CD8-positive, alpha-beta T cell (primary cell): ENCODE measurements at regions of chr6 and their contacts with region 1.

Region 1: DNA sequence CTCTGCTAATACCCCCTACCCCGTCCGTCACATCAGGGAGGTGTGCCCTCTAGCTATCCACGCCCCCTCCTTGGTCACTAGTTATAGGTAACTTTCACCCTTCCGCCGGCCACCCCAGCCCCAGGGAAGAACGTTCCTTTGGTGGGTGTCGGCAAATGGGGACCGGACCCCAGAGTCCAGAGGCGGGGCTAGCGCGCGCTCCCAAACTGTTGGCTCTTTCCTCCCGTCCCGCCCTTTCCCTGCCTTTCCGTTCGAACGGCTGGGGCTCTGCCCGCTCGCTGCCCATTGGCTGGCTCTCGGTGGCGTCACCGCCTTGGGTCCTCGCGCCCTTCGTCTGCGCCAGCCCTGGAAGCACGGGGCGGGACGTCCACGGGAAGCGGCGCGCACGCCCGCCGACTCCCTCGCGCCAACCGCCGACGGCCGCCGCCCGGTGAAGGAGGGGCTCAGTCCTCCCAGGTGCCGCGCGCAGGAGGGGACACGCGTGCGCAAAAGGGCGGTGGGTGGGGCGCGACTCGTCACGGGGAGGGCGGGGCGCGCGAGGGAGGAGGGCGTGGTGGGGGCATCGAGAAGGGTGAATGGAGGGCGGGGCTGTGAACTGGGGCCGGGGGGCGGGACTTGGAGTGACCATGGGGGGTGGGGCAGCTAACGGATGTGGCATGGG is 634 bp upstream of the PHF1 start:
- DNase-seq: peak; percentile 93 to 99 (median 99)
- ATAC-seq: peak; percentile 68
- H3K4me3 ChIP-seq: peak overlapping the region; percentile 82 to 95
- H3K4me3 Mint-ChIP-seq: peak overlapping the region; percentile 88
- H3K27ac ChIP-seq: peak overlapping the region; percentile 94 to 96
- H3K27ac Mint-ChIP-seq: peak overlapping the region; percentile 91
- H3K4me1 ChIP-seq: peaks cover 40% of the 10 kb centered on the region
- H3K4me1 Mint-ChIP-seq: peaks cover 47% of the 10 kb centered on the region
- H3K27me3 ChIP-seq: no peaks in the 10 kb centered on the region
- H3K27me3 Mint-ChIP-seq: no peaks in the 10 kb centered on the region
- CTCF ChIP-seq: no peak

Region 2: GRCh38 chr6:33144373-33144772 is 265.8 kb before region 1 on chr6:
- CTCF ChIA-PET with region 1: no interaction called
- POLR2A ChIA-PET with region 1: no interaction called
- intact Hi-C with region 1: no loop called
- DNase-seq: peak in 1 of 9 experiments; percentile 19
- ATAC-seq: no peak
- H3K4me3 ChIP-seq: no peak overlapping the region
- H3K4me3 Mint-ChIP-seq: no peak overlapping the region
- H3K27ac ChIP-seq: no peak overlapping the region
- H3K27ac Mint-ChIP-seq: no peak overlapping the region
- H3K4me1 ChIP-seq: no peaks in the 10 kb centered on the region
- H3K4me1 Mint-ChIP-seq: peaks cover 2% of the 10 kb centered on the region
- H3K27me3 ChIP-seq: no peaks in the 10 kb centered on the region
- H3K27me3 Mint-ChIP-seq: peaks cover 27% of the 10 kb centered on the region
- CTCF ChIP-seq: no peak

Region 3: GRCh38 chr6:33317669-33318425 is 92.3 kb before region 1 on chr6 and contains the start of gene ZBTB22:
- CTCF ChIA-PET with region 1: no interaction called
- POLR2A ChIA-PET with region 1: no interaction called
- intact Hi-C with region 1: loop called (anchors 1 kb)
- DNase-seq: peak; percentile 91 to 98 (median 96)
- ATAC-seq: peak; percentile 61
- H3K4me3 ChIP-seq: peak within 1 kb of the TSS; percentile 72 to 78
- H3K4me3 Mint-ChIP-seq: peak within 1 kb of the TSS; percentile 99
- H3K27ac ChIP-seq: peak within 1 kb of the TSS; percentile 60 to 99
- H3K27ac Mint-ChIP-seq: peak within 1 kb of the TSS; percentile 97
- H3K4me1 ChIP-seq: peaks cover 65% of the 10 kb centered on the region
- H3K4me1 Mint-ChIP-seq: peaks cover 77% of the 10 kb centered on the region
- H3K27me3 ChIP-seq: no peaks in the 10 kb centered on the region
- H3K27me3 Mint-ChIP-seq: no peaks in the 10 kb centered on the region
- CTCF ChIP-seq: no peak
- total RNA-seq, gene ZBTB22: 8.8 to 9.3 TPM

Region 4: GRCh38 chr6:33323623-33323948 is 86.6 kb before region 1 on chr6:
- CTCF ChIA-PET with region 1: no interaction called
- POLR2A ChIA-PET with region 1: no interaction called
- intact Hi-C with region 1: loop called in 1 of 2 experiments (anchors 1 kb)
- DNase-seq: peak in 1 of 9 experiments; percentile 29
- ATAC-seq: no peak
- H3K4me3 ChIP-seq: peak overlapping the region; percentile 85 to 93
- H3K4me3 Mint-ChIP-seq: peak overlapping the region; percentile 96
- H3K27ac ChIP-seq: peak overlapping the region; percentile 83 to 91
- H3K27ac Mint-ChIP-seq: peak overlapping the region; percentile 94
- H3K4me1 ChIP-seq: peaks cover 43% of the 10 kb centered on the region
- H3K4me1 Mint-ChIP-seq: peaks cover 53% of the 10 kb centered on the region
- H3K27me3 ChIP-seq: no peaks in the 10 kb centered on the region
- H3K27me3 Mint-ChIP-seq: no peaks in the 10 kb centered on the region
- CTCF ChIP-seq: no peak

Region 5: GRCh38 chr6:33430991-33431879 is 21.1 kb after region 1 on chr6:
- CTCF ChIA-PET with region 1: interaction called, 6 read pairs
- POLR2A ChIA-PET with region 1: interaction called, 9 read pairs
- intact Hi-C with region 1: loop called in 1 of 2 experiments (anchors 1 kb)
- DNase-seq: peak; percentile 77 to 93 (median 88)
- ATAC-seq: peak; percentile 59
- H3K4me3 ChIP-seq: peak overlapping the region; percentile 38 to 53
- H3K4me3 Mint-ChIP-seq: peak overlapping the region; percentile 93
- H3K27ac ChIP-seq: peak overlapping the region; percentile 53 to 81
- H3K27ac Mint-ChIP-seq: peak overlapping the region; percentile 94
- H3K4me1 ChIP-seq: peaks cover 56% of the 10 kb centered on the region
- H3K4me1 Mint-ChIP-seq: peaks cover 64% of the 10 kb centered on the region
- H3K27me3 ChIP-seq: no peaks in the 10 kb centered on the region
- H3K27me3 Mint-ChIP-seq: no peaks in the 10 kb centered on the region
- CTCF ChIP-seq: no peak